CD8-positive, alpha-beta T cell (primary cell): ENCODE measurements at regions of chr18 and their contacts with region 1.

Region 1: DNA sequence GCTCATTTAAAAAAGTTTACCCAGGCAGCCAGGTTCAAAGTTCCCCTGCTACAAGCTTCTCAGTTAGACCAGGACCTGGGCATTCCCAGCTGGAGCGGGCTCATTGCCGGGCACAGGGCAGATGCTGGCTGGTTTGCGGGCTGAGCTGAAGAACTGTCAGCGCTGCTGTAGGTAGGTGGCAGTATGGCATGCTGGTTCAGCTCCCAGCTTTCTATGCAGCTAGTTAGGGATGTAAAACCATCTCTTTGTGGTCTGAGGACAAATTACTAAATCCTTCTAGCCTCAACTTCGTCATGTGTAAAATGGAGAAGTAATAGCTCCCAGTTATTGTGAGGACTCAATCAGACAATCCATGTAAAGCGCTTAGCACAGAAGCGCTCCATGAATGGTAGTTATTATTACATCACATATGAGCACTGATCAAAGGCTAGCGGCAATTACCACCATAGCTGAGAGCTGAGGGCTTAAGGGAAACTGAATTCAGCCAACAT is 2.4 kb upstream of the LDLRAD4 start:
- DNase-seq: peak in 8 of 9 experiments; percentile 24 to 76 (median 54)
- ATAC-seq: peak; percentile 47
- H3K4me3 ChIP-seq: peak overlapping the region in 1 of 2 experiments; percentile 39
- H3K4me3 Mint-ChIP-seq: peak overlapping the region; percentile 96
- H3K27ac ChIP-seq: no peak overlapping the region
- H3K27ac Mint-ChIP-seq: peak overlapping the region; percentile 93
- H3K4me1 ChIP-seq: peaks cover 26% of the 10 kb centered on the region
- H3K4me1 Mint-ChIP-seq: peaks cover 31% of the 10 kb centered on the region
- H3K27me3 ChIP-seq: peaks cover 0 to 5% of the 10 kb centered on the region in 2 experiments
- H3K27me3 Mint-ChIP-seq: peaks cover 20% of the 10 kb centered on the region
- CTCF ChIP-seq: peak; percentile 61

Region 2: GRCh38 chr18:13261661-13262357 is 45.7 kb after region 1 on chr18:
- CTCF ChIA-PET with region 1: interaction called, 3 read pairs
- POLR2A ChIA-PET with region 1: no interaction called
- intact Hi-C with region 1: loop called (anchors 1 to 5 kb)
- DNase-seq: peak in 2 of 9 experiments; percentile 49 to 52
- ATAC-seq: peak; percentile 69
- H3K4me3 ChIP-seq: no peak overlapping the region
- H3K4me3 Mint-ChIP-seq: peak overlapping the region; percentile 63
- H3K27ac ChIP-seq: no peak overlapping the region
- H3K27ac Mint-ChIP-seq: peak overlapping the region; percentile 43
- H3K4me1 ChIP-seq: peaks cover 35% of the 10 kb centered on the region
- H3K4me1 Mint-ChIP-seq: peaks cover 45% of the 10 kb centered on the region
- H3K27me3 ChIP-seq: peaks cover 0 to 3% of the 10 kb centered on the region in 2 experiments
- H3K27me3 Mint-ChIP-seq: no peaks in the 10 kb centered on the region
- CTCF ChIP-seq: no peak

Region 3: GRCh38 chr18:13313006-13313686 is 97.0 kb after region 1 on chr18:
- CTCF ChIA-PET with region 1: interaction called, 4 read pairs
- POLR2A ChIA-PET with region 1: interaction called, 3 read pairs
- intact Hi-C with region 1: loop called in 1 of 2 experiments (anchors 5 kb)
- DNase-seq: peak in 7 of 9 experiments; percentile 26 to 75 (median 53)
- ATAC-seq: peak; percentile 77
- H3K4me3 ChIP-seq: no peak overlapping the region
- H3K4me3 Mint-ChIP-seq: peak overlapping the region; percentile 38
- H3K27ac ChIP-seq: peak overlapping the region; percentile 10 to 15
- H3K27ac Mint-ChIP-seq: peak overlapping the region; percentile 90
- H3K4me1 ChIP-seq: peaks cover 34% of the 10 kb centered on the region
- H3K4me1 Mint-ChIP-seq: peaks cover 48% of the 10 kb centered on the region
- H3K27me3 ChIP-seq: peaks cover 0 to 2% of the 10 kb centered on the region in 2 experiments
- H3K27me3 Mint-ChIP-seq: no peaks in the 10 kb centered on the region
- CTCF ChIP-seq: no peak

Region 4: DNA sequence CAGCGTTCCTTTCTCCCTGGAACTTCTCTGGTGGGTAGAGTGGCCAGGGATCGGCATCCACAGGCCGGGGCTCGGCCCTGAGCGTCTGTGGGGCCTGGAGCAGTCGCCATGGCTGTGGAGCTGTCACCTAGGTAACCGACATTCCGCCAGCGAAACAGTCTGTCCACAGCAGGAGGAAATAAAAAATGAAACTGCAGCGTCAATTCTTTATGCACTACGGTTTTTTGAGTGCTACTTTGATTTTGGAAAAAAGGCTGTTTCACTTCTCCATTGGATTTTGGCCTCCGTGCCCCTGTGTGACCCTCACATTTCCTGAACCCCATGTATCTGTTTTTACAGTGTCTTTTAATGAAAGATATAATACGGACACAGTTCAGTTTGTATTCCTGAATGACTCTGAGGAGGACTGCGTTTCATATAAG is 165.8 kb after region 1 on chr18:
- CTCF ChIA-PET with region 1: interaction called, 7 read pairs
- POLR2A ChIA-PET with region 1: interaction called, 5 read pairs
- intact Hi-C with region 1: loop called (anchors 1 to 5 kb)
- DNase-seq: peak in 6 of 9 experiments; percentile 41 to 74 (median 51)
- ATAC-seq: peak; percentile 46
- H3K4me3 ChIP-seq: peak overlapping the region; percentile 32 to 57
- H3K4me3 Mint-ChIP-seq: peak overlapping the region; percentile 83
- H3K27ac ChIP-seq: peak overlapping the region; percentile 76 to 94
- H3K27ac Mint-ChIP-seq: peak overlapping the region; percentile 95
- H3K4me1 ChIP-seq: peaks cover 57% of the 10 kb centered on the region
- H3K4me1 Mint-ChIP-seq: peaks cover 65% of the 10 kb centered on the region
- H3K27me3 ChIP-seq: no peaks in the 10 kb centered on the region
- H3K27me3 Mint-ChIP-seq: no peaks in the 10 kb centered on the region
- CTCF ChIP-seq: no peak

Region 5: DNA sequence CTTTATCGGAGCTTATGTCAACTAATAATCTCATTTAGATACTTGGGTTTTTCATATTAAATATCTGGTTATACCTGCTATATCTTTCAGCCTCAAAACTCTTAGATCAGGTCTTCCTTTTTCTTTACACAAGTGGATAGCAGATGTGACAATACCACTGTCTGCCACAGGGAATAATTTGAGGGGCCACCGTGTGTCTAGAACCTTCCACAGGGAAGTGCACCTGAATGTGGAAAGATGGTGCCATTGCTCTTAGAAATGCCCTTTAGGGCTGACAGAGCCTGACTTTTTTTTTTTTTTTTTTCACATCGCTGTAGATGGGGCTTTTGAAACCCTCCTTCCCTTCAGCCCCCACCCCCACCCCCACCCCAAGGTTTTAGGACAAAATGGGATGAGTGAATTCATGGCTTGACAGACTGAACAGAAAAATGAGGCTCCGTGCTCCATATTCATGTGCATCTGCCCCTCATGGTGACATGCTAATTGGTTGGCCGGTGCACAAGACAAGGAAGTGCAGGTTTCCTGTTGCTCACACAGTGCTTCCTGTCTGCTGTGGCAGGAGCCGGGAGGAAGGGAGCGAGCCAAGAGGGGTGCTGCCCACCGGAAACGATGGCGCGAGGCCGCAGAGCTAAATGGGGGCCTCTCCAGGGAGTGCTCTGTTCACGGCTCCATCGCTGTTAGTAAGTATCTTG is 248.4 kb after region 1 on chr18:
- CTCF ChIA-PET with region 1: interaction called, 5 read pairs
- POLR2A ChIA-PET with region 1: no interaction called
- intact Hi-C with region 1: loop called in 1 of 2 experiments (anchors 1 kb)
- DNase-seq: peak; percentile 33 to 86 (median 76)
- ATAC-seq: peak; percentile 92
- H3K4me3 ChIP-seq: peak overlapping the region; percentile 60 to 73
- H3K4me3 Mint-ChIP-seq: peak overlapping the region; percentile 91
- H3K27ac ChIP-seq: peak overlapping the region; percentile 66 to 78
- H3K27ac Mint-ChIP-seq: peak overlapping the region; percentile 97
- H3K4me1 ChIP-seq: peaks cover 44% of the 10 kb centered on the region
- H3K4me1 Mint-ChIP-seq: peaks cover 71% of the 10 kb centered on the region
- H3K27me3 ChIP-seq: no peaks in the 10 kb centered on the region
- H3K27me3 Mint-ChIP-seq: no peaks in the 10 kb centered on the region
- CTCF ChIP-seq: no peak

Region 6: DNA sequence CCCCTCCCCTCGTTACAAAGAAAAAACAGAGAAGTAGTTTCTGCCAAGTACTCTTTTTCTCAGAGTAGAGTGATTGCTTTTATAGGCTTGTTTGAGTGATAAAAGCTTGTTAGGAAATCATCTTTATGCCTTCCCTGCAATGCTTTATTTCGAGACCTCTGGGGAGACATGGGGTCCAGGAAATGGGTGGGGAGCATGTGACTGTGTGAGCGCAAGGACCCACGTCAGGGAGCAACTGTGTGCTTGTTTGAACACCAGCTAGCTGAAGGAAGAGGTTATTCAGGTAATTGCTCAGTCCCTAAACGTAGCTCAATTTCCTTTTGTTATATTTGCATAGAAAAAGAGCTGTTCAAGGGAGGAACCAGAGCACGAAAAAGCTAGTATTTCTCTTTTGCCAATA is 322.9 kb after region 1 on chr18:
- CTCF ChIA-PET with region 1: interaction called, 5 read pairs
- POLR2A ChIA-PET with region 1: interaction called, 4 read pairs
- intact Hi-C with region 1: loop called (anchors 2 to 5 kb)
- DNase-seq: peak; percentile 15 to 89 (median 64)
- ATAC-seq: peak; percentile 91
- H3K4me3 ChIP-seq: peak overlapping the region in 1 of 2 experiments; percentile 6
- H3K4me3 Mint-ChIP-seq: peak overlapping the region; percentile 63
- H3K27ac ChIP-seq: peak overlapping the region; percentile 63 to 83
- H3K27ac Mint-ChIP-seq: peak overlapping the region; percentile 91
- H3K4me1 ChIP-seq: peaks cover 66% of the 10 kb centered on the region
- H3K4me1 Mint-ChIP-seq: peaks cover 85% of the 10 kb centered on the region
- H3K27me3 ChIP-seq: no peaks in the 10 kb centered on the region
- H3K27me3 Mint-ChIP-seq: no peaks in the 10 kb centered on the region
- CTCF ChIP-seq: no peak

Region 7: DNA sequence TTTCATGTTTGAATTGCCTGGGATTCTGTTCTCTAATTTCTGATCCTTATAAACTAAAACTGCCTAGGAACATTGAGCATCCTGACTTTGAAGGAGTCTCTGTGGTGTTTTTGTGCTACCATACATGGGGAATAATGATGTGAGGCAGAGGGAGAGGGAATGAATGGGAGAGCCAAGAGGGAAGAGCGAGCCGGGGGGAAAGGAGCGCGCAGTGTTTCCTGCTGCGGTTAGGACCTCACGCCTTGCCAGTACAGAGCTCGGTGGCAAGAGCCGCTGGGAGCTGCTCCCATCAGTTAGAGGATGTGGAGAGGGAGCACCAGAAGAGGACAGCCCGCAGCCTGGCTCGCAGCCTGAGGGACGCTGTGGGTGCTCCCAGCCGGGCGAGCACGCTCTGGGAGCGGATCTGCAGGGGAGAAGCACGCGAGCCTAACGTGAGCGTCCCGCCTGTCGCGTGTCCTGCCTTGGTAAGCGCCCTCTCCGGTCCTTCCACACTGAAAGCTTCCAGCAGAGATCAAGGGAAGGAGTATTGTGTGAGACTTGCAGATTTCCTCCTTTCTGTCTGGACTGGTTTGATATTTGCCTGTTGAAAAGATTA is 395.6 kb after region 1 on chr18:
- CTCF ChIA-PET with region 1: interaction called, 7 read pairs
- POLR2A ChIA-PET with region 1: interaction called, 4 read pairs
- intact Hi-C with region 1: loop called (anchors 1 to 5 kb)
- DNase-seq: peak in 2 of 9 experiments; percentile 26 to 36
- ATAC-seq: no peak
- H3K4me3 ChIP-seq: peak overlapping the region; percentile 36 to 55
- H3K4me3 Mint-ChIP-seq: peak overlapping the region; percentile 82
- H3K27ac ChIP-seq: peak overlapping the region; percentile 33 to 53
- H3K27ac Mint-ChIP-seq: peak overlapping the region; percentile 98
- H3K4me1 ChIP-seq: peaks cover 72% of the 10 kb centered on the region
- H3K4me1 Mint-ChIP-seq: peaks cover 83% of the 10 kb centered on the region
- H3K27me3 ChIP-seq: no peaks in the 10 kb centered on the region
- H3K27me3 Mint-ChIP-seq: no peaks in the 10 kb centered on the region
- CTCF ChIP-seq: no peak